ENCODE measurements at regions of chr1 and their contacts with region 1.

Region 1: GRCh38 chr1:63119575-63120155 is 202.7 kb upstream of the FOXD3 start:
- DNase-seq: no peak
- ATAC-seq: no peak
- H3K4me3 ChIP-seq: no peak overlapping the region
- H3K27ac ChIP-seq: no peak overlapping the region
- H3K4me1 ChIP-seq: peaks cover 10% of the 10 kb centered on the region
- H3K27me3 ChIP-seq: no peaks in the 10 kb centered on the region
- CTCF ChIP-seq: no peak
- EP300 ChIP-seq: no peak
- POLR2A ChIP-seq: no peak
- RAD21 ChIP-seq: no peak

Region 2: DNA sequence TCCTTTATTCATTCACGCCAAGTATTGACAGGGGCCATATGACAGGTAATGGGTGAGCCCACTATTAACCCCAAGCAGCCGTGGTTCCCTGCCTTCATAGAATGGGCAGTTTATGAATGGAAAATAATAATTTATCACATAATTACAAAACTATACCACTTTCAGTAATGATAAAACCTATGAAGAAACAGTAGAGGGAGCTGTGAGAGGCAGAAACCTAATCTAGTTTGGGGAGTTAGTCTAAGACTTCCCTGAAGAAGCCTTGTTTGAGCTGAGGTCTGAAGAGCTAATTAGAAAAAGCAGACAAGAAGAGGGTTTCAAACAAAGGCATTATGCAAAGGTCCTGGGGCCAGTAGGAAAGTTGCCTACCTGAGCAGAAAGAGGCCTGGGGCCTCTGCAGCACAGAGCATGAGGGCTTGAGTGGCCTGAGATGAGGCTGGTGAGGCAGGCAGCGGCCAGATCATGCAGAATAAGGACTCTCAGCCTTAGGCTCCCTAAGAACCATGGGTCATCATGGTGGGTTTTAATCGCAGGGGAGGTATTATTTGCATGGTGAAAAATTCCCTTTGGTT is 192.9 kb before region 1 on chr1:
- CTCF ChIA-PET with region 1: no interaction called
- POLR2A ChIA-PET with region 1: no interaction called
- RAD21 ChIA-PET with region 1: no interaction called
- SMC1A ChIA-PET with region 1: no interaction called
- in situ Hi-C with region 1: no loop called
- intact Hi-C with region 1: no loop called
- DNase-seq: no peak
- ATAC-seq: no peak
- H3K4me3 ChIP-seq: no peak overlapping the region
- H3K27ac ChIP-seq: no peak overlapping the region
- H3K4me1 ChIP-seq: no peaks in the 10 kb centered on the region
- H3K27me3 ChIP-seq: no peaks in the 10 kb centered on the region; a peak in 1 of 4 replicates
- CTCF ChIP-seq: 0 out of 6 replicates have a peak, but pooled peaks of 1 of the 3 experiments have one; percentile 11
- EP300 ChIP-seq: no peak
- POLR2A ChIP-seq: no peak
- RAD21 ChIP-seq: 0 out of 2 replicates have a peak, but pooled peaks have one; percentile 1

Region 3: GRCh38 chr1:62989497-62989896 is 130.2 kb before region 1 on chr1:
- CTCF ChIA-PET with region 1: no interaction called
- POLR2A ChIA-PET with region 1: no interaction called
- RAD21 ChIA-PET with region 1: no interaction called
- SMC1A ChIA-PET with region 1: no interaction called
- in situ Hi-C with region 1: no loop called
- intact Hi-C with region 1: no loop called
- DNase-seq: no peak
- ATAC-seq: no peak
- H3K4me3 ChIP-seq: no peak overlapping the region
- H3K27ac ChIP-seq: no peak overlapping the region
- H3K4me1 ChIP-seq: no peaks in the 10 kb centered on the region
- H3K27me3 ChIP-seq: no peaks in the 10 kb centered on the region; a peak in 1 of 4 replicates
- CTCF ChIP-seq: 0 out of 6 replicates have a peak, but pooled peaks of 1 of the 3 experiments have one; percentile 5
- EP300 ChIP-seq: no peak
- POLR2A ChIP-seq: no peak
- RAD21 ChIP-seq: no peak

Region 4: GRCh38 chr1:63033211-63033610 is 86.5 kb before region 1 on chr1:
- CTCF ChIA-PET with region 1: no interaction called
- POLR2A ChIA-PET with region 1: no interaction called
- RAD21 ChIA-PET with region 1: no interaction called
- SMC1A ChIA-PET with region 1: no interaction called
- in situ Hi-C with region 1: no loop called
- intact Hi-C with region 1: no loop called
- DNase-seq: no peak
- ATAC-seq: no peak
- H3K4me3 ChIP-seq: no peak overlapping the region
- H3K27ac ChIP-seq: no peak overlapping the region
- H3K4me1 ChIP-seq: no peaks in the 10 kb centered on the region
- H3K27me3 ChIP-seq: no peaks in the 10 kb centered on the region
- CTCF ChIP-seq: no peak
- EP300 ChIP-seq: no peak
- POLR2A ChIP-seq: no peak
- RAD21 ChIP-seq: no peak

Region 5: DNA sequence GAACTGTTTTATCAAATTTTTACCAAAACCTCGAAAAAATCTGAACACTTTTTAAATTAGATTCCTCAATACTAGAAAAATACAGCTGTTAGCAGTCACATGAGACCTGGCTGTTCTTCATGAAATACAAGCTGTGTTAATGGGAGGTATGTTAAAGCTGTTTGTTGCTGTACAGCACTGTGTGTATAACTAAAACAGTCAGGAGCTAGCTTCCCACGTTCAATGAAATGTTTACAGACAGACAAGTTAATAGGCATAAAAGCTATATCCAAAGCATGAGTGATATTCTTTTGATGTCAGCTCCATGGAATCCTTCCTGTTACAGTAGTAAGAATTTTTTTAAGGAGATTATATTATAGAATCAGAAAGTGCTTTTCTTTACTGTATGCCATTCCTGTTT is 20.5 kb before region 1 on chr1:
- CTCF ChIA-PET with region 1: interaction called, 4 read pairs
- POLR2A ChIA-PET with region 1: no interaction called
- RAD21 ChIA-PET with region 1: no interaction called
- SMC1A ChIA-PET with region 1: interaction called, 3 read pairs
- in situ Hi-C with region 1: no loop called
- intact Hi-C with region 1: loop called (anchors 2 kb)
- DNase-seq: no peak
- ATAC-seq: no peak
- H3K4me3 ChIP-seq: no peak overlapping the region
- H3K27ac ChIP-seq: no peak overlapping the region
- H3K4me1 ChIP-seq: no peaks in the 10 kb centered on the region
- H3K27me3 ChIP-seq: no peaks in the 10 kb centered on the region; a peak in 1 of 4 replicates
- CTCF ChIP-seq: no peak
- EP300 ChIP-seq: no peak
- POLR2A ChIP-seq: no peak
- RAD21 ChIP-seq: no peak

Region 6: DNA sequence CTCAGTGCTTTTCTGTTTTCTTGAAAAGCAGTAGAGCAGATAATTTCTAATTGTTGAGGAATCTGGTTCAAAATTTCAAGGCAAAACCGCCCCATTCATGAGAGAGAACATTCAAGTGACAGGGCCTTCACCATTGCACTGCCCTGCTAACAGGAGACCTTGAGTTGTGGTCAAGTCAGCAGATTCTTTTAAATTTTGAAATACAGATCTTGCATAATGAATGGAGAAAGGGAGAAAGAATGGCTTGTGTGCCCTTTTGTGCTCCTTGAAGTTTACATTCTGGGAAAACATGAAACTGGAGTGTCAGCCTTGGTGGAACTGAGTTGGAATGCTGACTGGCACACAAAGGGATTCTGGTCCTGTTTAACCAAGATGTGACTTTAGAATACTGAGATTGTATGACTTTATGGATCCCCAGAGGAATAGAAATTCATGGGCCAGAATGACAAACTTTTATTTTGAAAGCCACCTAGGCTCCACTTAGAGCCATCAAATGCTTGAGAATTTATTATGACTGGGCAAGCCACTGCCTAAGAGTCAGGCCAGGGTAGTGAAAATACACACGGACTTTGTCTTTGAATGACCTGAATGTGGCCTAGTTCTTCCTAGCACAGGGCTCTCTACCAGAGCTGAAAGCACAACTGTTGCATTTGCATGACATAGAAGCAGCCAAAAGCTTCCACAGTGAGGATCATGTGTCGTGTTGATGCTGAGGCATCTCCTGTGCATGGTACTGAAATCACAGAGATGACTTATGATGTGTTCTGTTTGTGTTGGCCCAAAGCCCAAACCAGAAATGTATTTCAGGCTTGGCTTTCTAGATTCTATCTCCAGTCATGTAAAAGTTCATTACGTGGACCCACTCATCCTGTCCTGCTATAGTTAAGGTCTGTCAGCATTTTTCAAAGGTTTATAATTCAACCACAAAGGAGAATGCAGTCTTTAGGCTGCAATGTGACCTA is 919.6 kb after region 1 on chr1:
- CTCF ChIA-PET with region 1: no interaction called
- POLR2A ChIA-PET with region 1: no interaction called
- RAD21 ChIA-PET with region 1: no interaction called
- SMC1A ChIA-PET with region 1: no interaction called
- in situ Hi-C with region 1: no loop called
- intact Hi-C with region 1: no loop called
- DNase-seq: no peak
- ATAC-seq: no peak
- H3K4me3 ChIP-seq: no peak overlapping the region
- H3K27ac ChIP-seq: no peak overlapping the region
- H3K4me1 ChIP-seq: no peaks in the 10 kb centered on the region
- H3K27me3 ChIP-seq: peaks cover 0 to 3% of the 10 kb centered on the region in 2 experiments; a peak in 1 of 4 replicates
- CTCF ChIP-seq: no peak
- EP300 ChIP-seq: no peak
- POLR2A ChIP-seq: no peak
- RAD21 ChIP-seq: no peak